Cardiac septum (tissue), 1 donor: ENCODE measurements at regions of chrX and their contacts with region 1.

Region 1: GRCh38 chrX:101415180-101416145 is 7.4 kb downstream of the HNRNPH2 start:
- DNase-seq: no peak

Region 2: DNA sequence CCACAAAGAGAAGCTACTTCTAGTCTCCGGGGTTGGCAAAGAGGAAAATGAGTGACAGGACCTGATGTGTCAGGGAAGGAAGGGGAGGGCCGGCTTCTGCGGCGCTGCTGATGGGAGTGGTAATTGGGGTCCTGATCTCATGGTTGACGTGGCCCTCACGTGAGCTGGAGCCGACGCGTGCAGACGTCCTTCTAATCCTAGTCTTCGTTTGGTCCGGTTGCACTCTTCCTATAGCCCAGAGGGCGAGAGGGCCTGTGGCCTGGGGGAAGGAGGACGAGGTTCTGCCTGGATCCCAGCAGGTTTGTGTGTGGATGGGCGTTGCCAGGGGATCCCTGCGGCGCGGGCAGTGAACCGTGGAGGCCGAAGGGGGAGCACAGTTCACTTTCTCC is 134.9 kb after region 1 on chrX and contains the start of gene ARMCX1:
- intact Hi-C with region 1: loop called (anchors 2 kb)
- DNase-seq: peak; percentile 87
- total RNA-seq, gene ARMCX1: 33.2 TPM

Region 3: GRCh38 chrX:101799387-101799786 is 383.9 kb after region 1 on chrX:
- intact Hi-C with region 1: loop called (anchors 5 kb)
- DNase-seq: peak; percentile 81